AG04450 (cell line): ENCODE measurements at regions of chr19 and their contacts with region 1.

Region 1: DNA sequence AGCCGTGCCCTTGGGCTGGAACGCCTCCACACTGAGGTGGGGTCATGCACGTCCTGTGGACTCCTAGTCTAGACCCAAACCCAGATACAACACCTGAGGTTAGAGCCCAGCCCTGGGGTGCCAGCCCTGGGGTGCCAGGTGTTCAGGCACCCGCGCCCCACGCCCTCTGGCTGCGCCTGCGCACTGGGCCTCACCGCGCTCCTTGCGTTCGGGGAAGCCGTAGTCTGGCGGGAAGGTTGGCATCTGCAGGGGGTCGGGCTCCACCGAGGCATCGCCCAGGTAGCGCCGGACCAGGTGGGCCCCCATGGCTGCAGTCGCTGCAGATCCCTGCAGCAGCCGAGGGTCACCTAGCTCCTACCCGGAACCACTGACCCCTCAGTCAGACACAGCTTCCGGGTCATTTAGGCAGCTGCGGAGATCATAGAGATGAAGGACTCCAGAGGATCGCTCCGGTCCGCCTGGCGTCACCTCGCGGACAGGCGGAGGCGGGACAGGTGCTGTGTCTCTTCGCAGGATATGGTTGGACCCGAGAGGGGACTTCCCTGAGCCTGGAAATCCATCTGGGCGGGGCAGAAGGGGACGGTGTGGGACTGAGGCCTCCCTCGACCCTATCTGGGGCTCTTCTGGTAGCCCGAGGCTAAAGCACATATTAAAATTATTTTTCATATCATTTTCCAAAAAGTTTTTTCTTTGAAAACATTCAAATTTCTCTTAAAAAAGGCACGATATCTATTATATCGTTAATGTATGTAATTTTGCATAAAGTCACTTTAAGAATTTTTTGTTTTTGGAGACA is at the start of gene NDUFB7:
- DNase-seq: peak; percentile 78
- H3K4me3 ChIP-seq: peak within 1 kb of the TSS; percentile 99
- H3K27ac ChIP-seq: no peak within 1 kb of the TSS
- H3K27me3 ChIP-seq: no peaks in the 10 kb centered on the region
- CTCF ChIP-seq: peak; percentile 64
- polyA plus RNA-seq, gene NDUFB7: 97.3 and 164 TPM in 2 replicates

Region 2: GRCh38 chr19:14689598-14690503 is 118.0 kb after region 1 on chr19 and contains the start of gene ZNF333:
- CTCF ChIA-PET with region 1: interaction called, 237 read pairs
- POLR2A ChIA-PET with region 1: interaction called, 5 read pairs
- DNase-seq: peak; percentile 77
- H3K4me3 ChIP-seq: peak within 1 kb of the TSS; percentile 91
- H3K27ac ChIP-seq: peak within 1 kb of the TSS; percentile 98
- H3K27me3 ChIP-seq: no peaks in the 10 kb centered on the region
- CTCF ChIP-seq: no peak
- polyA plus RNA-seq, gene ZNF333: 10.7 and 11.8 TPM in 2 replicates

Region 3: GRCh38 chr19:14821937-14822336 is 250.0 kb after region 1 on chr19:
- CTCF ChIA-PET with region 1: no interaction called
- POLR2A ChIA-PET with region 1: no interaction called
- DNase-seq: no peak
- H3K4me3 ChIP-seq: no peak overlapping the region
- H3K27ac ChIP-seq: no peak overlapping the region
- H3K27me3 ChIP-seq: no peaks in the 10 kb centered on the region
- CTCF ChIP-seq: no peak

Region 4: GRCh38 chr19:14890643-14891379 is 318.9 kb after region 1 on chr19:
- CTCF ChIA-PET with region 1: interaction called, 23 read pairs
- POLR2A ChIA-PET with region 1: no interaction called
- DNase-seq: no peak
- H3K4me3 ChIP-seq: no peak overlapping the region
- H3K27ac ChIP-seq: no peak overlapping the region
- H3K27me3 ChIP-seq: no peaks in the 10 kb centered on the region
- CTCF ChIP-seq: no peak